CD4-positive, alpha-beta T cell (primary cell): ENCODE measurements at regions of chr3 and their contacts with region 1.

Region 1: GRCh38 chr3:94062431-94063404 is at the starts of genes DHFR2 and NSUN3:
- DNase-seq: peak; percentile 68 to 95 (median 76)
- ATAC-seq: peak; percentile 86
- H3K4me3 ChIP-seq: peak within 1 kb of the TSS; percentile 88
- H3K4me3 Mint-ChIP-seq: peak within 1 kb of the TSS; percentile 99
- H3K27ac ChIP-seq: peak within 1 kb of the TSS; percentile 92 to 99
- H3K27ac Mint-ChIP-seq: peak within 1 kb of the TSS; percentile 100
- H3K4me1 ChIP-seq: peaks cover 12% of the 10 kb centered on the region
- H3K4me1 Mint-ChIP-seq: peaks cover 73% of the 10 kb centered on the region
- H3K27me3 ChIP-seq: no peaks in the 10 kb centered on the region
- H3K27me3 Mint-ChIP-seq: no peaks in the 10 kb centered on the region
- CTCF ChIP-seq: no peak
- total RNA-seq, gene DHFR2: 0.74 to 0.75 TPM
- total RNA-seq, gene NSUN3: 12.4 to 13.4 TPM

Region 2: GRCh38 chr3:93979833-93980676 is 82.7 kb before region 1 on chr3 and contains the start of gene ARL13B:
- CTCF ChIA-PET with region 1: no interaction called
- POLR2A ChIA-PET with region 1: interaction called, 28 read pairs
- intact Hi-C with region 1: loop called (anchors 1 kb)
- DNase-seq: peak; percentile 85 to 98 (median 90)
- ATAC-seq: peak; percentile 100
- H3K4me3 ChIP-seq: peak within 1 kb of the TSS; percentile 97
- H3K4me3 Mint-ChIP-seq: peak within 1 kb of the TSS; percentile 95
- H3K27ac ChIP-seq: peak within 1 kb of the TSS; percentile 80 to 92
- H3K27ac Mint-ChIP-seq: peak within 1 kb of the TSS; percentile 85
- H3K4me1 ChIP-seq: peaks cover 16% of the 10 kb centered on the region
- H3K4me1 Mint-ChIP-seq: peaks cover 38% of the 10 kb centered on the region
- H3K27me3 ChIP-seq: no peaks in the 10 kb centered on the region
- H3K27me3 Mint-ChIP-seq: no peaks in the 10 kb centered on the region
- CTCF ChIP-seq: no peak
- total RNA-seq, gene ARL13B: 3.4 to 4.4 TPM

Region 3: DNA sequence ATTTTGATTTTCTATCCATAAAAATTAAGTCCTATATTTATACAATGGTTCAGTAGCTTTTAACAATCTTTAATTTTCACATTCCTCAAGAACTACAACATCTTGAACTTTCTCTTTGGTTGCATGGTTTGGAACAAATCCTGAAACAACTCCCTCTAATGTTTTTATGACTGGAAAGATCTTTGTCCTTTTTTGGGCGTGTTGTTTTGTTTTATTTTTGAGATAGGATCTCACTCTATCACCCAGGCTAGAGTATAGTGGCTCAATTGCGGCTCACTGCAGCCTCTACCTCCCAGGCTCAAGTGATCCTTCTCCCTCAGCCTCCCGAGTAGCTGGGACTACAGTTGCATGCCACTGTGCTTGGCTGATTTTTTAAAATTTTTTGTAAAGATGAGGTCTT is 38.3 kb before region 1 on chr3:
- CTCF ChIA-PET with region 1: no interaction called
- POLR2A ChIA-PET with region 1: interaction called, 10 read pairs
- intact Hi-C with region 1: no loop called
- DNase-seq: no peak
- ATAC-seq: no peak
- H3K4me3 ChIP-seq: no peak overlapping the region
- H3K4me3 Mint-ChIP-seq: no peak overlapping the region
- H3K27ac ChIP-seq: no peak overlapping the region
- H3K27ac Mint-ChIP-seq: no peak overlapping the region
- H3K4me1 ChIP-seq: no peaks in the 10 kb centered on the region
- H3K4me1 Mint-ChIP-seq: no peaks in the 10 kb centered on the region
- H3K27me3 ChIP-seq: no peaks in the 10 kb centered on the region
- H3K27me3 Mint-ChIP-seq: no peaks in the 10 kb centered on the region
- CTCF ChIP-seq: no peak

Region 4: DNA sequence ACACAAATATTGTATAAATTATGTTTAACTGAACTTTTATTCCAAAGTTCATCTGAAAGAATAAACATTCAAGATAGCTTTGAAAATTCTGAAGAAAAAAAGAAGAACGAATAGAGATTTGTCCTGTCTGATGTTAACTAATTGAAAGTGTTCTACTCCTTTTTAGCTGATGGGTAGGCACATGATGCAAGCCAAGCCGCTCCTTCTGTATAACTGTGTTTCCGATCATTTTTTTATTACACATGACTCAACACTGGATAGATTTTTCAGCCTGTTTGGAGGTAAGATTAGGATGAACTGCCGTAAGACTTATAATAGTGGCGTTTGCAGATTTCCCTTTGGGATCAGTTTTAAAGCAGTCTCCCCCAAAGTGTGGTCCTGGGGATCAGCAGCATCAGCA is 19.2 kb after region 1 on chr3:
- CTCF ChIA-PET with region 1: no interaction called
- POLR2A ChIA-PET with region 1: interaction called, 13 read pairs
- intact Hi-C with region 1: no loop called
- DNase-seq: no peak
- ATAC-seq: no peak
- H3K4me3 ChIP-seq: no peak overlapping the region
- H3K4me3 Mint-ChIP-seq: no peak overlapping the region
- H3K27ac ChIP-seq: no peak overlapping the region
- H3K27ac Mint-ChIP-seq: peak overlapping the region; percentile 55
- H3K4me1 ChIP-seq: peaks cover 15% of the 10 kb centered on the region
- H3K4me1 Mint-ChIP-seq: peaks cover 72% of the 10 kb centered on the region
- H3K27me3 ChIP-seq: no peaks in the 10 kb centered on the region
- H3K27me3 Mint-ChIP-seq: no peaks in the 10 kb centered on the region
- CTCF ChIP-seq: no peak

Region 5: DNA sequence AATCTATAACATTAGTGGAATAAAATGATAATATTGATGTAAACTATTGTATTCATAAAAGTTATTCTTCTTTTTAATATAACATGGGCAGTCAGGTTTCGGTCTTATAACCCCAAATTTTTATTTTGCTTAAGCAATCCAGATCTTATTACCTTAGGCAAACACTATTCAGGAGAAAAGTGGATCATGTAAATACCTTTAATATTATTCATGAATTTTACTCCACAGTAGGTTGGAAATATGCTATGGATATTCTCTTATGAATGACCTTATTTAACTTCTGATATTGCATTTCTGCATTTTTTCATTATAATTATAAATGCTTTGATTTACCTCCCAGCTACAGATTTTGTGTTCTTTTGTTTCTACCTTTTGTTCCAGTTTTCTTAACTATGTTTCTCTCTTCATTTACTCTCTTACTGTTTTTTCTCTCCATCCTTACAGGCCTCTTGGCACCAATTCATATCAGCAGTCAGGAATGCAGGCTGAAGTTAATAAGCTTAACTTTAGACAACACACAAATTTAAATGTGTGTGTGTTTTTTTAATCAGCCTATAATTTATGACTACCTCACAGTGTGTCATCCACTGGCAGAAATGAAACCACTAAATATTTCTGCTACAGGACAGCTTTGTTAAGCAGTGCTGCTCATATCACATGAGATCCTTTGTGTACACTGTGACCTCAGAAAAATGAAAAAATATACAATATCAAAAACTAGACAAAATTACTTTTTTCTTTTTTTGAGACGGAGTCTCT is 111.1 kb after region 1 on chr3:
- CTCF ChIA-PET with region 1: no interaction called
- POLR2A ChIA-PET with region 1: no interaction called
- intact Hi-C with region 1: no loop called
- DNase-seq: no peak
- ATAC-seq: no peak
- H3K4me3 ChIP-seq: no peak overlapping the region
- H3K4me3 Mint-ChIP-seq: no peak overlapping the region
- H3K27ac ChIP-seq: no peak overlapping the region
- H3K27ac Mint-ChIP-seq: no peak overlapping the region
- H3K4me1 ChIP-seq: no peaks in the 10 kb centered on the region
- H3K4me1 Mint-ChIP-seq: no peaks in the 10 kb centered on the region
- H3K27me3 ChIP-seq: peaks cover 0 to 2% of the 10 kb centered on the region in 2 experiments
- H3K27me3 Mint-ChIP-seq: peaks cover 12% of the 10 kb centered on the region
- CTCF ChIP-seq: no peak